Activated CD4-positive, alpha-beta T cell treated with anti-CD3 and anti-CD28 coated beads, Interleukin-2, amount 10 ng/mL, durations not matched to agents 24 days and 14 days (primary cell): ENCODE measurements at regions of chr5 and their contacts with region 1.

Region 1: DNA sequence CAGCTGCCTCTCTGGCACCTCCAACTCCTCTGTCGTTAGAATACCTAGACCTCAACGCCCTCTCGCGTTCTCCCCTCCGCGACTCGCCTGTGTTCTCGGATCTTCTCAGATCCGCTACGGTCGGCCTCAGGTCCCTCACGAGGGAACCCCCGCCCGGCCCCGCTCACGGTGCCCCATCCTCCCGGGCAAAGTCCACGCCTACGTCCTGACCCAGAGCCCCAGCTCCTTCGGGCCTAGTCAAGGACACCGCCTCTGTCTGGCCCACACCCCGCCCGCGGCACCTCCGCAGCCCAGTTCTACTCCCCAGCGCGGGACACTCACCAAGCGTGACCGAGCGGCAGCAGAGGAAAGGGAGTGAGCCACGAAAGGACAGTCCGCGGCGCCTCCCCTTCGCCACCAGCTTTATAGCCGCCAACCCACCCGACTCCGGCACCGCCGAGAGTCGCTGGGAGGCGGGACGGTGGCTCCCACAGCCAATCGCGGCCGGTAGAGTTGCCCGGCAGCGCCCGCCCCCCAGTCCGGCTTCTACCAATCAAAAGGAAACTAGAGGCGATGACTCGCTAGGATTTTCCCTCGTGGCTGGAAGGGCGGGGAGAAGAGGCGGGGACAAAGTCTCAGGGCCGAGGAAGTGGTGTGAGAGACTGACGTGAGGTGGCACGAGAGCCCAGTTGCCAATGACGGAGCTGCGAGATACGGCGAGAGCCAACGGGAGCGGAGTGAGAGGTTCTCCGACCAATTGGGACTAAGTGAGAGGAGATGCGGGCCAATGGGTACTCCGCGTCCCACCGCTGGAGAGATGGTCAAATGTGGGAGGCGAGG is at the start of gene HMGCS1:
- DNase-seq: peak; percentile 100
- H3K4me3 Mint-ChIP-seq: peak within 1 kb of the TSS; percentile 89
- H3K27ac Mint-ChIP-seq: peak within 1 kb of the TSS; percentile 94
- H3K4me1 Mint-ChIP-seq: peaks cover 56% of the 10 kb centered on the region
- H3K27me3 Mint-ChIP-seq: no peaks in the 10 kb centered on the region
- total RNA-seq, gene HMGCS1: 230 and 241 TPM in 2 replicates

Region 2: DNA sequence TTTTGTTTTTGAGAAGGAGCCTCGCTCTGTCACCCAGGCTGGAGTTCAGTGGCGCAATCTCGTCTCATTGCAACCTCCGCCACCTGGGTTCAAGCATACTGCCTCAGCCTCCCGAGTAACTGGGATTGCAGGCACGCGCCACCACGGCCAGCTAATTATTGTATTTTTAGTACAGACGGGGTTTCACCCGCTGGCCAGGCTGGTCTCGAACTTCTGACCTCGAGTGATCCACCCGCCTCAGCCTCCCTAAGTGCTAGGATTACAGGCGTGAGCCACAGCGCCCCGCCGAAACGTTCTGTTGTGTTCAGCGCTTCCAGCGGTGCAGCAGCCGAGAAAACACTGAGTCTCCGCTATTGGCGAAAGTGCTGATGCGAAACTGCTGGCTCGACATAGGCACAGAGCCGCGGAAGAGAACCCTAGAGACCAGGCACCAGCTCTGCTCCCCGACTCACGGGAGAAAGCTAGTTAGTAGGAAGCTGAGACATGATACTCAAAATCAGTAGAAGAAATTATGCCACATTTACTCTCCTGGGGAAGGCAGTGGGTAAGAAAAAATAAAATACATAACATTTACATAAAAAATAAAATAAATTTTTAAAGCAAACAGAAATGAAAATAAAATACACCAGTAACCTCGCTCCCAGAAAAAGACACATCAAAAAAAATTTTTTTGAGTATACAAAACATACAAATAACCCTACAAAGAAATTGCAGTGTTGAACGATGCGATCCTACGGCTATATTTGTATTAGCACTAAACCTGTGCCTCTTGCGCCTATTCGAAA is 304.7 kb before region 1 on chr5:
- intact Hi-C with region 1: loop called (anchors 5 kb)
- DNase-seq: peak; percentile 96
- H3K4me3 Mint-ChIP-seq: peak overlapping the region; percentile 88
- H3K27ac Mint-ChIP-seq: peak overlapping the region; percentile 95
- H3K4me1 Mint-ChIP-seq: peaks cover 36% of the 10 kb centered on the region
- H3K27me3 Mint-ChIP-seq: no peaks in the 10 kb centered on the region

Region 3: GRCh38 chr5:43120720-43121564 is 192.3 kb before region 1 on chr5 and contains the start of gene ZNF131:
- intact Hi-C with region 1: loop called (anchors 1 kb)
- DNase-seq: peak; percentile 99
- H3K4me3 Mint-ChIP-seq: peak within 1 kb of the TSS; percentile 90
- H3K27ac Mint-ChIP-seq: peak within 1 kb of the TSS; percentile 97
- H3K4me1 Mint-ChIP-seq: peaks cover 25% of the 10 kb centered on the region
- H3K27me3 Mint-ChIP-seq: peaks cover 2% of the 10 kb centered on the region
- total RNA-seq, gene ZNF131: 37.9 and 40.1 TPM in 2 replicates

Region 4: DNA sequence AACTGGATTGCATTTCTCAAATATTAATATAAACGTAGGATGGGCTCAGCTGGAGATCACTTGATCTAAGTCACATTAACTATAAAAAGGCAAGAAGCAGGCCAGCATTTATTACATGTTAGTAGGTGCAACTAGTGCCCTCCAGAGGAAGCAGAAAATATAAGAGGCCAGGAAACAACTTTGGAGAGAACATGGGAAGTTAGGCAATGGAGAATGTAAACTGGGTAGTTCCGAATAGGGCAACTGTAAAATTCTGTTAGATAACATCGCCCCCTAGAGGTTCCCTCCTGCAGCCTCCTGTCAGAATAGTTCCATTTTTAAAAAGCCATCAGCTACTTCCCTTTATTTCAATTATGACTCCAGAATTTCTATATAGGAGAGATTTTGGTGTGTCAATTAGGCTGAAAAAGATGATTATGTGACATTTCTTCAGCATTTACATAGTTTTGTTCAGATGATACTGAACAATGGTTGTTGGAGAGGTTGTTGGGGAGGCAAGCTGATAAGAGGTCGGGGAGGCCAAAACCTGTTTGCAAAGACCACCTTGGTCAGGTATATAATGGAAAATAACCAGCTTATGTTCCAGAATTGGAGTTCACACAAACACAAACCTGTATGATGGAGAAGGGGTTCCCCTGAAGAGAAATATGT is 76.6 kb after region 1 on chr5:
- intact Hi-C with region 1: loop called (anchors 2 kb)
- DNase-seq: peak; percentile 86
- H3K4me3 Mint-ChIP-seq: no peak overlapping the region
- H3K27ac Mint-ChIP-seq: no peak overlapping the region
- H3K4me1 Mint-ChIP-seq: peaks cover 26% of the 10 kb centered on the region
- H3K27me3 Mint-ChIP-seq: no peaks in the 10 kb centered on the region

Region 5: GRCh38 chr5:43556857-43557542 is 243.8 kb after region 1 on chr5 and contains the start of gene PAIP1:
- intact Hi-C with region 1: loop called (anchors 2 kb)
- DNase-seq: peak; percentile 96
- H3K4me3 Mint-ChIP-seq: peak within 1 kb of the TSS; percentile 91
- H3K27ac Mint-ChIP-seq: peak within 1 kb of the TSS; percentile 90
- H3K4me1 Mint-ChIP-seq: peaks cover 12% of the 10 kb centered on the region
- H3K27me3 Mint-ChIP-seq: peaks cover 13% of the 10 kb centered on the region
- total RNA-seq, gene PAIP1: 60.2 and 64.1 TPM in 2 replicates